HepG2 (cell line): ENCODE measurements at regions of chr12 and their contacts with region 1.

Region 1: GRCh38 chr12:67943226-67943892 is 45.9 kb upstream of the IFNG-AS1 start:
- DNase-seq: peak; percentile 46
- ATAC-seq: peak; percentile 76
- H3K4me3 ChIP-seq: no peak overlapping the region
- H3K27ac ChIP-seq: no peak overlapping the region
- H3K4me1 ChIP-seq: no peaks in the 10 kb centered on the region
- H3K27me3 ChIP-seq: peaks cover 0 to 12% of the 10 kb centered on the region in 2 experiments; a peak in 3 of 5 replicates
- CTCF ChIP-seq: peak; percentile 73
- EP300 ChIP-seq: no peak
- POLR2A ChIP-seq: no peak
- RAD21 ChIP-seq: no peak

Region 2: GRCh38 chr12:67161322-67161918 is 781.9 kb before region 1 on chr12:
- CTCF ChIA-PET with region 1: no interaction called
- POLR2A ChIA-PET with region 1: no interaction called
- in situ Hi-C with region 1: no loop called
- intact Hi-C with region 1: loop called (anchors 2 kb)
- DNase-seq: peak; percentile 18
- ATAC-seq: peak; percentile 81
- H3K4me3 ChIP-seq: no peak overlapping the region
- H3K27ac ChIP-seq: no peak overlapping the region
- H3K4me1 ChIP-seq: no peaks in the 10 kb centered on the region
- H3K27me3 ChIP-seq: no peaks in the 10 kb centered on the region; a peak in 1 of 5 replicates
- CTCF ChIP-seq: peak; percentile 60
- EP300 ChIP-seq: no peak
- POLR2A ChIP-seq: no peak
- RAD21 ChIP-seq: no peak

Region 3: DNA sequence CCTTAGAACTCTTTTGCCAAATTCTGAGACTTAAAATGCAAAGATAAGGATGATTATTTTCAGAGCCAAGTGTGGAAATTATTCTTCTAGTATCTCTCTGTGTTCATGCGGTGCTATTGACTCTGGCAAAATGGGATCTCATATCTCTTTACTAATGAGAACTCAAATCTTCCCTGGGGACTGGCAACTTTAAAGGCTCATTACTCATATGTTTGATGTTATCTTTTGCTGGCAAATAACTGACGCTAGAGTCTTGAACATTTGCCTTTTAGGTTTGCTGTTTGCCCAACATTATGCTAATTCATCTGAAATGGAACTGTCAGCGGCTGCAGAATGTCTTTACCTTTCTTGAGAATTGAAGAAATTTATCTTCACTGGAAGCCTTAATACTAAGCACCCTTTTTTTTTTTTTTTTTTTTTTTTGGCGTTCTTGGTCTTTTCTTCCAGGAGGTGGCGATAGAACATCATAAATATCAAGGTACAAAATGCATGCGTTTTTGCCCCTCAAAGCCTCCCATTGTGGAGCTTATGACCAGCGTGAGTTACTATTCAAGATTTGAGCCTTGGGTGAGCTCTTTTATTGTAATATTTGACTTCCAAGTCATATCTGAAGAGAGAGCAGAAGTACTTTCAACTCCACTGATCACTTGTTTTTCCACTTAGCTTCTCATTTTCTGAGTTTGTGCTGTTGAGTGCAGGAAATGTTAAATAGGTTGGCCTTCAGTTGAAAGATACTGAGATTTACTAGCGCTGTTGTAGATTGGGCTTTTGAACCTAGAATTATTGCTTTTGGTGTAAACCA is 587.6 kb before region 1 on chr12:
- CTCF ChIA-PET with region 1: interaction called, 19 read pairs
- POLR2A ChIA-PET with region 1: no interaction called
- in situ Hi-C with region 1: loop called (anchors 5 kb)
- intact Hi-C with region 1: loop called (anchors 1 kb)
- DNase-seq: peak; percentile 42
- ATAC-seq: peak; percentile 67
- H3K4me3 ChIP-seq: no peak overlapping the region
- H3K27ac ChIP-seq: no peak overlapping the region
- H3K4me1 ChIP-seq: no peaks in the 10 kb centered on the region
- H3K27me3 ChIP-seq: no peaks in the 10 kb centered on the region
- CTCF ChIP-seq: peak; percentile 57
- EP300 ChIP-seq: no peak
- POLR2A ChIP-seq: no peak
- RAD21 ChIP-seq: 0 out of 2 replicates have a peak, but pooled peaks have one; percentile 24

Region 4: GRCh38 chr12:67441736-67442346 is 501.5 kb before region 1 on chr12:
- CTCF ChIA-PET with region 1: no interaction called
- POLR2A ChIA-PET with region 1: no interaction called
- in situ Hi-C with region 1: no loop called
- intact Hi-C with region 1: loop called (anchors 5 kb)
- DNase-seq: peak; percentile 58
- ATAC-seq: peak; percentile 99
- H3K4me3 ChIP-seq: no peak overlapping the region
- H3K27ac ChIP-seq: no peak overlapping the region
- H3K4me1 ChIP-seq: 0 out of 2 replicates have a peak, but pooled peaks cover 11% of the 10 kb centered on the region
- H3K27me3 ChIP-seq: peaks cover 0 to 2% of the 10 kb centered on the region in 2 experiments; a peak in 1 of 5 replicates
- CTCF ChIP-seq: peak; percentile 85
- EP300 ChIP-seq: peak in 1 of 2 experiments; percentile 43; a peak in 1 of 4 replicates
- POLR2A ChIP-seq: no peak
- RAD21 ChIP-seq: peak; percentile 49; the same call in 1 of the 2 replicates

Region 5: DNA sequence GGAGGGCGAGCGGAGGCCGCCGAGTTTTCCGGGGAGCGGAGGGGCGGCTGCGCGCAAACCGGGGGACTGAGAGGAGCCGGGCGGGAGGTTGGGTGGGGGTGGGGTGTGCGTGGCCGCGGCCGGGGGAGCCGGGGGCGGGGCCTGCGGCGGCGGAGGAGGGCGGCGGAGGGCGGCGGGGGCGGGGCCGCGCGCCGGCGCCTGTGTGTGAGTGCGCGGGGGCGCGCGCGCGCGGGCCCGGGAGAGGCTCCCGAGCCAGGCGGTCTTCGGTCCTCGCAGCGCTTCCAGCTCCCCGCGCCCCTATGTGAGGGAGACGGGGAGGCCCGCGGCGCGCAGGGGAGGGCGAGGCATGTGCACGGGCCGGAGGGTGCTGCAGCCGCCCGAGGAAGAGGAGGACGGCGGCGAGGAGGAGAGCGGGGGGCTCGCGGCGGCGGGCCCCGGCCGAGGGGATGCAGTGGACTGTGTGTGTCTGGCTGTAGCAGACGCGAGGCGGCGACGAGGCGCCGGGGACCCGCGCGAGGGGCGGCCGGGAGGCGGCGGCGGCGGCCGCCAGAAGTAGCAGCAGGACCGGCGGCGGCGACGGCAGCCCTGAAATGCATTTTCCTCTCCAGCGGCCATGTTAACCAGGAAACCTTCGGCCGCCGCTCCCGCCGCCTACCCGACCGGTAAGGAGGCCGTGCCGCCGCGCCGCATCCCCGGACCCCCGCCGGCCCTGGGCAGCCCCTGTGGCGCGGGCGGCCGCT is 294.7 kb before region 1 on chr12 and contains the start of gene DYRK2:
- CTCF ChIA-PET with region 1: no interaction called
- POLR2A ChIA-PET with region 1: no interaction called
- in situ Hi-C with region 1: no loop called
- intact Hi-C with region 1: loop called (anchors 2 kb)
- DNase-seq: peak; percentile 29
- ATAC-seq: peak; percentile 45
- H3K4me3 ChIP-seq: peak within 1 kb of the TSS; percentile 79 to 84 (median 84)
- H3K27ac ChIP-seq: peak within 1 kb of the TSS; percentile 80
- H3K4me1 ChIP-seq: peaks cover 27% of the 10 kb centered on the region
- H3K27me3 ChIP-seq: 0 out of 5 replicates have a peak, but pooled peaks cover 0 to 3% of the 10 kb centered on the region in 2 experiments
- CTCF ChIP-seq: peak; percentile 18; the same call in 1 of the 2 replicates
- EP300 ChIP-seq: no peak
- POLR2A ChIP-seq: peak; percentile 69 to 77
- RAD21 ChIP-seq: peak; percentile 51; the same call in 1 of the 2 replicates
- total RNA-seq, gene DYRK2: 10.1 and 11.5 TPM in 2 replicates